Tibial artery (tissue), 4 donors: ENCODE measurements at regions of chr4 and their contacts with region 1.

Region 1: DNA sequence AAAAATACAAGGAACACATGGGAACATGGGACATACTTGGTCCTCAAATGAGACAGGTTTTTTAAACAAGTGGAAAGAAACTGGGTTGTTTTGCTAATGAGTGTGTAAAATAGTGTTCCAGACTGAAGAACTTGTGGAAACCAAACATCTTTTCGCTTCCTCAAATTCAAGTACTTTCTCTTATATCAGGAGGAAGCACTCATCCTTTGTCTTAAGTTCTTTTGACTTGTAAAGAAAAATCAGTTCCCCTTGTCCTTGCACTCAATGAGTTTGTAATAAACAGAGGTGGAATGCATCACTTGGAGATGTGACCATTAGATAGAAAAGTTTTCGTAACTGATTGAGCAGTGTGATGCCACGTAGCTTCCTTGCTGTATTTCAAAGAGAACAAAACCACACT is 101.1 kb downstream of the PHOX2B start:
- DNase-seq: no peak
- H3K4me3 ChIP-seq: no peak overlapping the region
- H3K27ac ChIP-seq: no peak overlapping the region
- H3K4me1 ChIP-seq: peaks cover 0 to 27% (median 14%) of the 10 kb centered on the region in 4 donors
- H3K27me3 ChIP-seq: no peaks in the 10 kb centered on the region
- CTCF ChIP-seq: no peak

Region 2: DNA sequence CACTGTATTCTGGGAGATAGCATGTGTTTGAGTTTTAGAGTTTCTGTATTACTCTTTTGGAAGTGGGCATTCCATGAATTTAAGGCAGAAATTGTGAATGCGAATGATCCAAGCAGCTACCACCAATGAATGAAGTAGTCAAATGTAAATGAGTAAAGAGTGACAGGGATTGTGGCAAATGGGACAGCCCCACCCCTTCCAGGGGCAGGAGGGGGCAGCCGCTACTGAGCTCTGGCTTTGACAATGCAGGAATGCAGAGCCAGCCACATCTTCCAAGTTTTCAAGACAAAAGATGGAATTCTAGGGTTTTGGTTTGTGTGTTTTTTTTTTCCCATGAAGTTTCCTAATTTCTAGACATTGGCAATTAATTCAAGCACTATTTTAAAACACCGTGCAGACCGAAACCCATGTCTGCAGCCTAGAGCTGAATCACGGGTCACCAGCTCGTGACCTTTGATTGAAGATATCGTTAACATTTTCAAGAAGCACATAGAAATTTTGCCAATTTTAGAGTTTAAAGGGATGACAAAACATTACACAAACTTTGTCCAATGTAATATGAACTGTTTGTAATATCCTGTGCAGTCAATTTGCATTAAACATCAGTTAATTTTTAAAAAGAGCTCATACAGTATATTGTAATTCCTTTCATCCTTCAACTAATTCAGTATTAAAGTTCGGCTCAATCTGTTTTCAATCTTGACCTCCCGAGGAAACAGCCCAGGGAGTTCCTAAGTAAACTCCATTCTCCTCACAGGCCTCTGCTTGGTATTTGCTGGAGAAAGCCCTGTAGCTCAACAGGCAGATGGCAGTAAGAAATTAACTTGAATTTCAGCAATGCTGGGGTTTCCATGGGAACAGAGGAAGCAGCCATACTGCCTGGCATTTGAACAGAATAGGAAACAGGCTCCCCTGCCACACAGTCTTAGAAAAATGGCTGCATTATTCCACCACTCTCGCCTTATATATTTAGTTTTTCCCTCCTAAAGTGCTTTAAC is 307.3 kb before region 1 on chr4:
- intact Hi-C with region 1: loop called (anchors 5 kb)
- DNase-seq: no peak
- H3K4me3 ChIP-seq: no peak overlapping the region
- H3K27ac ChIP-seq: no peak overlapping the region
- H3K4me1 ChIP-seq: no peaks in the 10 kb centered on the region
- H3K27me3 ChIP-seq: no peaks in the 10 kb centered on the region
- CTCF ChIP-seq: peak; percentile 50 to 52

Region 3: GRCh38 chr4:41384992-41385391 is 262.4 kb before region 1 on chr4:
- intact Hi-C with region 1: no loop called
- DNase-seq: peak; percentile 78
- H3K4me3 ChIP-seq: no peak overlapping the region
- H3K27ac ChIP-seq: no peak overlapping the region
- H3K4me1 ChIP-seq: peaks cover 0 to 63% (median 14%) of the 10 kb centered on the region in 4 donors
- H3K27me3 ChIP-seq: no peaks in the 10 kb centered on the region
- CTCF ChIP-seq: no peak

Region 4: DNA sequence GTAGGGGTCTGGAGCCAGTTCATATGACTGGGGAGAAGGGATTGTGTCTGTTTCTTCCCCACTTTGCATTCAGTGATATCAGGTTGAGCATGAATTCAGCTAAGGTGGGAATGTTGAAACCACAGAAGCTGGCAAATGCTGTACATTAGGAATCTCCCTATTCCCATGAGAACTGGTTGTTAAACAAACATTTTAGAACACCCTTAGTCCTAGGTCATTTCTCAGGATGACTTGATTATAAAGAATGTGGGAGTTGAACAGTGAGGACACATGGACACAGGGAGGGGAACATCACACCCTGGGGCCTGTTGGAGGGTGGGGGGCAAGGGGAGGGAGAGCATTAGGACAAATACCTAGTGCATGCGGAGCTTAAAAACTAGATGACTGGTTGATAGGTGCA is 172.0 kb before region 1 on chr4:
- intact Hi-C with region 1: no loop called
- DNase-seq: no peak
- H3K4me3 ChIP-seq: no peak overlapping the region
- H3K27ac ChIP-seq: no peak overlapping the region
- H3K4me1 ChIP-seq: peaks cover 0 to 31% (median 15%) of the 10 kb centered on the region in 4 donors
- H3K27me3 ChIP-seq: no peaks in the 10 kb centered on the region
- CTCF ChIP-seq: no peak